ENCODE measurements at regions of chr6 and their contacts with region 1.

Region 1: GRCh38 chr6:44151348-44152108 is 7.1 kb upstream of the CAPN11 start:
- DNase-seq: peak; percentile 95
- H3K4me3 Mint-ChIP-seq: peak overlapping the region; percentile 17
- H3K27ac Mint-ChIP-seq: no peak overlapping the region
- H3K4me1 Mint-ChIP-seq: peaks cover 11% of the 10 kb centered on the region
- H3K27me3 Mint-ChIP-seq: no peaks in the 10 kb centered on the region

Region 2: GRCh38 chr6:43541774-43542471 is 609.6 kb before region 1 on chr6:
- intact Hi-C with region 1: no loop called
- DNase-seq: no peak
- H3K4me3 Mint-ChIP-seq: no peak overlapping the region
- H3K27ac Mint-ChIP-seq: no peak overlapping the region
- H3K4me1 Mint-ChIP-seq: peaks cover 1% of the 10 kb centered on the region
- H3K27me3 Mint-ChIP-seq: no peaks in the 10 kb centered on the region

Region 3: DNA sequence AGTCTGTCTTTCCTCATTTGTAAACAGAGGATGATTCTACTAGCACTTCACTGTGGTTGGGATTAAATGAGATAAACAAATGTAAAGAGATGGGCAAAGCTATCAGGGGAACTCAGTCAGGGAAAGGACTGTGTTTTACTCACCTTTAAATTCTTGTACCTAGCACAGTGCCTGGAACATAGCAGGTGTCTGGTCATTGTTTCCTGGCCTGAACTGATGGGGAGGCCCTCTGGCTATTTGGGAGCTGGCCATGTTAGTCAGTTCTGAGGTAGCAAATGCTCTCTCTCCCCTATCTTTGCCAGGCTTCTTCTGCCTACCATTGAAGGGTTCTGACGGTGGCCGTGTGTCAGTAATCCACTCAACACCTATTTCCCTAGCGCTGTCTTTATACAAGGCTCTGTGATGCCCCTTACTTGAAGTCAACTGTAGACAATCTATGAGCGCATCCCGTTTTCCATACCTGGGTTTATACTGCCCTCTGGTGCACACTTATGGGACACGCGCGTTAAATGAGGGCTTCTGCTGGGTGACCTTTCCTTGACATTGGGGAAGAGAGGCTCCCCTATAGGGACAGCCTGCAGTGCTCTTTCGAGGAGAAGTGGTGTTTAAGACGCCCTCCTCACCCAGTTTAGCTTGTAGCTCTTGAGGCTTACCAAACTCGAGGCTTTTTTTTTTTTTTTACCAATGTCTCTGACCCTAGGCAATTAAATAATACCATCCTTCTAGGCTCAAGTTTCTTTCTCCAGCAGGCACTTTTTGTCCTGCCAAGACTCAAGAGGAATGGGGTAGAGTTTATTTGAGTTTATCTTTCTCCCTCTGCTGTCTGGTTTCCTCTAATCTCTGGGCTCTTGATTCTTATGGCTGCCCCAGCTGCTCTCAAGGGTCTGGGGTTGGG is 186.9 kb after region 1 on chr6:
- intact Hi-C with region 1: loop called (anchors 1 kb)
- DNase-seq: peak; percentile 91
- H3K4me3 Mint-ChIP-seq: no peak overlapping the region
- H3K27ac Mint-ChIP-seq: no peak overlapping the region
- H3K4me1 Mint-ChIP-seq: no peaks in the 10 kb centered on the region
- H3K27me3 Mint-ChIP-seq: peaks cover 30% of the 10 kb centered on the region

Region 4: DNA sequence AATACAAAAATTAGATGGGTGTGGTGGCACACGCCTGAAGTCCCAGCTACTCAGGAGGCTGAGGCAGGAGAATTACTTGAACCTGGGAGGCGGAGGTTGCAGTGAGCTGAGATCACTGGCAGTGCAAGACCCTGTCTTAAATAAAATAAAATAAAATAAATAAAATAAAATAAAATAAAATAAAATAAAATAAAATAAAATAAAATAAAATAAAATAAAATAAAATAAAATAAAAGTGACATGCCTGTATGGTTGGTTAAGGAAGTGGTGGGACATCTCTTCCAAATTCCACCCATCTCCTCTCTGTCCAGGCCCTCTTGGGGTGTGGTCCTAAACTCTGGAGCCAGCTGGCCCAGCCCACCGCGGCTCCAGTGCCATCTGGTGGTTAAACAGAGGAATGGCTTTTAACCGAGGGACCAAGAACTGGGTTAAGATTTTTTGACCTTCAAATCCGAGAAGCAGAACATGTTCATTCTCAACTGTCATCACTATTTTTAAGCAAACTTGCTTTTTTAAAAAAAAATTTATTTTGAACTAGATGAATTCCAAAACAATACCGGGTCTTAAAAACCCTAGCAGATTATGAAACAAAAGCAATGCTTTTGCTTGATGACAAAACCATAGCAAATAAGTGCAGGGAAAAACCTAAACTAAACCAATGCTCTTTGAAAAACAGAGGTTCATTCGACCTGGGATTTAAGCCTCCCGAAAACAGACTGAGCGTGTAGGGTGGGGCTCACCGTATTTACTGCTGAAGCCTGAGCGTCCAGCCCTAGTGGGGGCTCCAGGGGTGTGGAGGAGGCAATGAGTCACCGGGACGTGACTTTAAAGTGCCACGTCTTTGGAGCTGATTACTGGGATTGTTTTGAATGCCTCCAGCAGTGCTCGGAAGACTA is 304.8 kb after region 1 on chr6:
- intact Hi-C with region 1: no loop called
- DNase-seq: peak; percentile 79
- H3K4me3 Mint-ChIP-seq: no peak overlapping the region
- H3K27ac Mint-ChIP-seq: no peak overlapping the region
- H3K4me1 Mint-ChIP-seq: no peaks in the 10 kb centered on the region
- H3K27me3 Mint-ChIP-seq: no peaks in the 10 kb centered on the region

Measured in activated CD4-positive, alpha-beta T cell treated with anti-CD3 and anti-CD28 coated beads, Interleukin-2, amount 10 ng/mL, durations not matched to agents 24 days and 14 days (primary cell).